ENCODE measurements at regions of chr2 and their contacts with region 1.

Region 1: GRCh38 chr2:179751163-179751809 is 110.1 kb downstream of the ZNF385B start:
- DNase-seq: no peak
- ATAC-seq: peak in 1 of 8 donors; percentile 29
- H3K4me3 ChIP-seq: no peak overlapping the region
- H3K27ac ChIP-seq: no peak overlapping the region
- H3K4me1 ChIP-seq: no peaks in the 10 kb centered on the region
- H3K27me3 ChIP-seq: no peaks in the 10 kb centered on the region
- CTCF ChIP-seq: peak; percentile 22 to 74 (median 61)

Region 2: GRCh38 chr2:179422037-179422643 is 329.1 kb before region 1 on chr2:
- intact Hi-C with region 1: loop called (anchors 2 to 10 kb)
- DNase-seq: peak; percentile 44 to 54
- ATAC-seq: peak in 5 of 8 donors; percentile 46 to 69 (median 61)
- H3K4me3 ChIP-seq: no peak overlapping the region
- H3K27ac ChIP-seq: no peak overlapping the region
- H3K4me1 ChIP-seq: no peaks in the 10 kb centered on the region
- H3K27me3 ChIP-seq: peaks cover 0 to 17% (median 0%) of the 10 kb centered on the region in 7 donors
- CTCF ChIP-seq: peak; percentile 36 to 81 (median 70)

Region 3: GRCh38 chr2:179595284-179595683 is 156.0 kb before region 1 on chr2:
- intact Hi-C with region 1: loop called in 3 of 10 experiments (anchors 10 kb)
- DNase-seq: no peak
- ATAC-seq: peak in 5 of 8 donors; percentile 61 to 81 (median 73)
- H3K4me3 ChIP-seq: no peak overlapping the region
- H3K27ac ChIP-seq: no peak overlapping the region
- H3K4me1 ChIP-seq: peaks cover 0 to 6% (median 0%) of the 10 kb centered on the region in 9 donors
- H3K27me3 ChIP-seq: no peaks in the 10 kb centered on the region
- CTCF ChIP-seq: peak in 4 of 9 donors; percentile 15 to 41 (median 22)

Region 4: DNA sequence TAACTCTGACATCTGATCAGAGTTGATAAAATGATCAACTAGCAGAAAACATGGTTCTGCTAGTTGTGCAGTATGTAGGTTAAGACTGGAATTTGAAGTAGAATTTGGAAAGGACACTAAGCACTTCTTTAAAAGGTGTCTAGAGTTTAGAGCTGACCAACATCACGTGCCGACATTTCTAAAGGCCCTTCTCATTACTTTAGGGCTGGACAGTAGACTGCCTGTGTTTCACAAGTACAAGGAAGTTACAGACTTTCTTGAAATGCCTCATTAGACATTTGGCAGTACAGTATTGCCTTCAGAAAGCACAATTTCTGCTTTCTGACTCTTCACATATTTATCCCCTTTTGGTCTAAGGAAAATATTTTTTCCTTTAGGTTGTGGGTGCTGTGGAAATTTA is 145.1 kb before region 1 on chr2:
- intact Hi-C with region 1: loop called in 2 of 10 experiments (anchors 10 kb)
- DNase-seq: no peak
- ATAC-seq: no peak
- H3K4me3 ChIP-seq: no peak overlapping the region
- H3K27ac ChIP-seq: no peak overlapping the region
- H3K4me1 ChIP-seq: peaks cover 0 to 14% (median 0%) of the 10 kb centered on the region in 9 donors
- H3K27me3 ChIP-seq: no peaks in the 10 kb centered on the region
- CTCF ChIP-seq: no peak

Region 5: GRCh38 chr2:179612108-179612507 is 139.2 kb before region 1 on chr2:
- intact Hi-C with region 1: loop called in 2 of 10 experiments (anchors 10 kb)
- DNase-seq: no peak
- ATAC-seq: no peak
- H3K4me3 ChIP-seq: no peak overlapping the region
- H3K27ac ChIP-seq: no peak overlapping the region
- H3K4me1 ChIP-seq: no peaks in the 10 kb centered on the region
- H3K27me3 ChIP-seq: no peaks in the 10 kb centered on the region
- CTCF ChIP-seq: no peak

Region 6: GRCh38 chr2:179701524-179702110 is 49.7 kb before region 1 on chr2:
- intact Hi-C with region 1: no loop called
- DNase-seq: no peak
- ATAC-seq: no peak
- H3K4me3 ChIP-seq: no peak overlapping the region
- H3K27ac ChIP-seq: no peak overlapping the region
- H3K4me1 ChIP-seq: no peaks in the 10 kb centered on the region
- H3K27me3 ChIP-seq: no peaks in the 10 kb centered on the region
- CTCF ChIP-seq: no peak

Measured in heart right ventricle (tissue), 16 donors.